RWPE1 (cell line): ENCODE measurements at regions of chr5 and their contacts with region 1.

Region 1: DNA sequence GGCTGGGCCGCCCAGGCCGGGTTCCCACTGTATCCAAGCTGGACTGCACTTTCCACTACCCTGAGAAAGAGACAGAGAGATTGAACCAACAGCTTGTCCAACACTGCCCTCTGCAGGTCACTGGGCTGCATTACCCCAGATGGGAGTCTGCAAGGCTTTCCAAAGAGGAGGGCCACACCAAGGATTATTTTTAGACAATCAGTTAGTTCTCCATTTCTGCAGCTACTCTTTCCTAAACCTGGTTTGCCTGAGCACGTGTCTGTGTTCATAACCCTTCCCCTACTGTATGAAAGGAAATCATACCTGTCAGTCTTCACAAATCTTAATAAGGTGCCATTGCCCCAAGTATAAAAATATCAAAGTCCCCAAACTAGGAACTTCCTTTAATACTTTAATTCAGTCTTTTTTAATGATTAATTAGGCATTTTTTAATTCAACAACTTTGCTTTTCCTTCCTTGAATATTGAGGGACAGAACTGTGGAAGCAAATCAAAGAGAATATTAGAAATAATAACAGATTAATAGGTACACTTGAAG is 13.4 kb upstream of the FGF1 start:
- DNase-seq: peak; percentile 90
- H3K27ac ChIP-seq: no peak overlapping the region
- CTCF ChIP-seq: peak; percentile 99

Region 2: DNA sequence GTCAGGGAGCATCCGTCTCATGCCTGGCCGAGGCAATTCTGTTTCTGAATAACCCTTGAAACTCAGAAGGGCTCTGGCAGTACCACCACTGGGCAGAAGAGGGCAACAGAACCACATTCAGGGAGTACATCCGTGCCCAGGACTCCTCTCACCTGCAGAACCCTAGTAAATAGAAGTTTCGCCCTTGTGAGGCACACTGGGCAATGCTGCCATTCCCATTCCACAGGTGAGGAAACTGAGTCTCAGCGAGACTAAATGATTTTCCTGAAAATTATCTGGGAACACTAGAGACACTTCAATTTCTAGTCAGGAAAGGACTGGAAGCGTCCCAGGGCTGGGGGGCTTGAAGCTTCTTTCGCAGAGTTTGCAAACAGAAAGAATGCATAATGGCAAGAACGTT is 88.1 kb before region 1 on chr5:
- CTCF ChIA-PET with region 1: interaction called, 32 read pairs
- POLR2A ChIA-PET with region 1: no interaction called
- DNase-seq: peak; percentile 81
- H3K27ac ChIP-seq: no peak overlapping the region
- CTCF ChIP-seq: peak; percentile 99

Region 3: GRCh38 chr5:142669477-142669876 is 29.8 kb before region 1 on chr5:
- CTCF ChIA-PET with region 1: interaction called, 18 read pairs
- POLR2A ChIA-PET with region 1: no interaction called
- DNase-seq: no peak
- H3K27ac ChIP-seq: no peak overlapping the region
- CTCF ChIP-seq: no peak

Region 4: DNA sequence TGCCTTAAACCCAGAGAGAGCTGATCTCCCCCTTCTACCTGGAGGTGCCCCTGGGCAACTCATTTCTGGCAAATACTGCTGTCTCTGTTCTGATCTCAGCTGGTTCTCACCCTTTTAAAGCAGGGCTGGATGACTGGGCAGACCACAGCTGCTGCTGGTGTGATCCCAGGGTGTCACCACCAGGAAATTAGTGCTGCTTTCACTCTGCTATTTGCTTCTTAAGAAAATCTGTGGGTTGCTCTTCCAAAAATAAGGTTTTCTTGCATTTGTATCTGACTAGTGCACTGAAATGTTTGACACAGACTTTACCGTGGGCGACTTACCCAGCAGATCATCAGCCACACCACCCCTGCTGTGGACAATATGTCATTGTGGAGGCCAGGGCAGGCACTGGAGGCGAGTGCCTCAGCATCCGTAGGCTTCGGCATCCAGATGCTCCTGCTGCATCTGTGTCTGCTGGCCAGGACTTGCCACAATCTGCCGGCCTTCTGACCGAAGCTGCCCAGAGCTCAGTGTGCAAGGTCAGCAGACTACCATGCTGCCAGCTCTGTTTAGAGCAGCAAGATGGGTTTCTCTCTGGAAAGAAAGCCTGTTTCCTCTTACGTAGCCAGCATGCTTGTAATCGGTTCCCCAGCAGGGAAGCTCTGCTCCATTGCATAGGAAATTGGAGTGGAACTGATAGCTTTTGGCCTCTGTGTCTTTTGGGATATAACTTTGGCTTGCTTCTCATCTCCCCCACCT is 84.5 kb after region 1 on chr5:
- CTCF ChIA-PET with region 1: interaction called, 3 read pairs
- POLR2A ChIA-PET with region 1: interaction called, 11 read pairs
- DNase-seq: no peak
- H3K27ac ChIP-seq: peak overlapping the region; percentile 6; the same call in 1 of the 2 replicates
- CTCF ChIP-seq: no peak